GM12878 (cell line): ENCODE measurements at regions of chr1 and their contacts with region 1.

Region 1: DNA sequence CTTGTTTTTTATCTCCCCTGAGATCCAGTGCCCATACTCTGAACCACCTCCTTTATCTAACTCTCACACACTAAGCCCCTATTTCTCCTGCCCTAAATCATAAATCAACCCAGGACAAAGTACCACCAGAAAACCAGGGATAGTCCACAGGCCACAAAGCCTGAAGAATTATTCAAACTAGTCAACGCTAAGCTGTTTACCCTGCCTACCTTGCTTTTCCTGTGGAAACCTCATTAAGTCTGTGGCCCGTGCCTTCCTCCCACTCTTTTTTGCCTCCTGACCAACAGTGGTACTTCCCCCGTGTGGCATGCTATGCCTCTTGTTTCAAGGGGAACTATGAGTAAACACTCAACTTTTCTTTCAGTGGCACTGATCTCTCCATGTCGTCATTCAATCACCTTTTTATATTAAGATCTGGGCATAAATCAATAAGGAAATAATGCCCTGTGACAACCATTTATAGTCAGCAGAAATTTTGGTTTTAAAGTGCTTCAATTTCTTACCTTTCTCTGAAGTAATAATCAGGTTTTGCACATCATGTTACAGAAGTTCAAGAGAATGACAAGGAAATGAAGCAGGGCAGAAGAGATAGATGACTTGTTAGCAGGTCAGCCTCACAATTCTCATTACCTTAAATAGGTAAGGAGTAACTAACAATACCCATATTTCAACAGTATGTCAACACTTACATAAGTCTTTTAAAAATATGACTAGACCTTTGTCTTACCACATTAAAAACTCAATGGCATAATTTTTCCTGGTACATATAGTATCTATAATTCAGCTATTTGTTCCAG is 32.1 kb downstream of the EYA3 start:
- DNase-seq: peak; percentile 69
- ATAC-seq: peak; percentile 94
- H3K4me3 ChIP-seq: no peak overlapping the region
- H3K27ac ChIP-seq: peak overlapping the region; percentile 20; the same call in 1 of the 2 replicates
- H3K4me1 ChIP-seq: no peaks in the 10 kb centered on the region; the same call in 1 of the 2 replicates
- H3K27me3 ChIP-seq: no peaks in the 10 kb centered on the region
- CTCF ChIP-seq: no peak
- EP300 ChIP-seq: peak in 1 of 2 experiments; percentile 25; a peak in 1 of 4 replicates
- POLR2A ChIP-seq: no peak
- RAD21 ChIP-seq: no peak

Region 2: GRCh38 chr1:27968694-27969093 is 87.6 kb before region 1 on chr1:
- CTCF ChIA-PET with region 1: no interaction called
- POLR2A ChIA-PET with region 1: no interaction called
- RAD21 ChIA-PET with region 1: no interaction called
- SMC1A ChIA-PET with region 1: no interaction called
- in situ Hi-C with region 1: no loop called
- intact Hi-C with region 1: no loop called
- DNase-seq: no peak
- ATAC-seq: no peak
- H3K4me3 ChIP-seq: no peak overlapping the region
- H3K27ac ChIP-seq: no peak overlapping the region
- H3K4me1 ChIP-seq: no peaks in the 10 kb centered on the region
- H3K27me3 ChIP-seq: no peaks in the 10 kb centered on the region
- CTCF ChIP-seq: no peak
- EP300 ChIP-seq: no peak
- POLR2A ChIP-seq: no peak
- RAD21 ChIP-seq: no peak

Region 3: DNA sequence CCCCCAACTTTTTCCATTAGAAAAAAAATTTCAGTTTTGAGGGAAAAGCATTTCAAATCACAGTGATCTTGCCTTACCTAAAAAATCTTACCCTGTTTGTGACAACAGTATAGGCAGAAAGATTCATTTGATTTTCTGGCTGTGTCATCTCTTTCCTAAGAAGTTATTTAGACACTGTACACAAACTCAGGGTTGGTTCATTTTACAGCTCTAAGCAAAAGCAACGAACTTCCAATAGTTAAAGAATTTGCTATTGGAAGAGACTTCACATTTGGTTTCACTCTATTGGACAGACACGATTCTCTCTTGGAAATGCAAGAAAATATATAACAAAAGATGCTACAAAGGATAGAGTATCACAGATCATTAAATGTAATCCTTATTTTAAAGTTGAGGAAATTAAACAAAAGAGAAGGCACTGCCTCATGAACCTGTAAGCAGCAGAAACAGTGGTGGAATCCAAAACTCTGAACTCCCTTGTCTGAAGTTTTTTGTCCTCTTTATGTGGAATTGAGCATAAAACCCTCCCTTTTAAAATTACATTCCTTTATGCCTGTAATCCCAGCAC is 11.3 kb after region 1 on chr1:
- CTCF ChIA-PET with region 1: interaction called, 18 read pairs
- POLR2A ChIA-PET with region 1: interaction called, 11 read pairs
- RAD21 ChIA-PET with region 1: interaction called, 5 read pairs
- SMC1A ChIA-PET with region 1: interaction called, 12 read pairs
- in situ Hi-C with region 1: no loop called
- intact Hi-C with region 1: no loop called
- DNase-seq: no peak
- ATAC-seq: no peak
- H3K4me3 ChIP-seq: no peak overlapping the region
- H3K27ac ChIP-seq: no peak overlapping the region
- H3K4me1 ChIP-seq: peaks cover 24% of the 10 kb centered on the region
- H3K27me3 ChIP-seq: no peaks in the 10 kb centered on the region
- CTCF ChIP-seq: no peak
- EP300 ChIP-seq: no peak
- POLR2A ChIP-seq: no peak
- RAD21 ChIP-seq: no peak